A673 (cell line): ENCODE measurements at regions of chr3 and their contacts with region 1.

Region 1: GRCh38 chr3:138923531-138923994 is 23.4 kb downstream of the FOXL2 start:
- DNase-seq: peak; percentile 91
- H3K4me3 ChIP-seq: no peak overlapping the region
- H3K27ac ChIP-seq: no peak overlapping the region
- H3K4me1 ChIP-seq: no peaks in the 10 kb centered on the region
- H3K27me3 ChIP-seq: no peaks in the 10 kb centered on the region
- CTCF ChIP-seq: peak; percentile 92

Region 2: DNA sequence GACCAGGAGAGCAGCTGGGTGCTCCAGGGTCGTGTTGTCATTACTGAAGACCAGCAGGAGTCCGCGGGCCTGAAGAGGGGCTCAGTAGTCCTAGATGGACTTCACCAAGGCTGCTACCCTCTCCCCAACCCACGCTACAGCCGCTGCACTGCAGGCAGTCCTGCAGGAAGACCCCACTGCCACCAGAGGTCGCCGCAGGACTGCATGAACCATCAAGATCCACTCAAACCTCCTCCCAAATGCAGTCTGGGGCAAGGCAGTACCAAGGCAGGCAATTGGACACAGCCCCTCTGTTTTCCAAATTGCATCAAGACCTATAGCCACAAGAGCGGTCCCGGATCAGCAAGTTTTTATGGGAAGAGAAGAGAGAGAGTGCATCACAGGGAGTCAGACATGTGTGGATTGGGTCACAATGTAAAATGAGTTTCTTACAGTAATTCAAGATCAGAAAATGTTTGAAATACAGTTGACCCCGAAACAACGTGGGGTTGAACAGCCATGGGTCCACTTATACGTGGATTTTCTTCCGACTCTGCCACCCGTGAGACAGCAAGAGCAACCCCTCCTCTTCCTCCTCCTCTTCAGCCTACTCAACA is 854.9 kb before region 1 on chr3:
- CTCF ChIA-PET with region 1: no interaction called
- POLR2A ChIA-PET with region 1: no interaction called
- intact Hi-C with region 1: loop called (anchors 2 kb)
- DNase-seq: peak; percentile 85
- H3K4me3 ChIP-seq: no peak overlapping the region
- H3K27ac ChIP-seq: no peak overlapping the region
- H3K4me1 ChIP-seq: no peaks in the 10 kb centered on the region
- H3K27me3 ChIP-seq: no peaks in the 10 kb centered on the region
- CTCF ChIP-seq: peak; percentile 99

Region 3: DNA sequence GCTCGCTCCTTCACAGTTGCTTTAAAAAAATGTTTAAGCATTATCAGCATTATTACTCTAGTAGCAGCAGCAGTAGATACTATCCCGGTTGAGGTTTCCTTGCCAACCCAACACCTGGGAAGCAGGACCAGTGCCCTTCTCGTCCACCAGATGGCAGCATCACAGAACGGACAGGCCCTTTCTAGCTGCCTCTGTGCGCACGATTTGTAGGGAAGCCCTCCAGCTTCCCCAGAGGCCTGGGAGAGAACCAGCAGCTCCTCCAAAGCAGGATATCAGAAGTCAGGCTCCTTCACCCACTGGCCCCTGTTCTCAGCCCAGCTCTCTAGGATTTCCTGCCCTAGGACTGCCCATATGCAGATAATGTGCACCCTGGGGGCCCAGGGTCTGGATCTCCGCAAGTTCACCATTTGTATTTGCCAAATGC is 506.0 kb before region 1 on chr3:
- CTCF ChIA-PET with region 1: interaction called, 8 read pairs
- POLR2A ChIA-PET with region 1: no interaction called
- intact Hi-C with region 1: loop called (anchors 1 kb)
- DNase-seq: peak; percentile 86
- H3K4me3 ChIP-seq: no peak overlapping the region
- H3K27ac ChIP-seq: no peak overlapping the region
- H3K4me1 ChIP-seq: no peaks in the 10 kb centered on the region
- H3K27me3 ChIP-seq: no peaks in the 10 kb centered on the region
- CTCF ChIP-seq: peak; percentile 92

Region 4: DNA sequence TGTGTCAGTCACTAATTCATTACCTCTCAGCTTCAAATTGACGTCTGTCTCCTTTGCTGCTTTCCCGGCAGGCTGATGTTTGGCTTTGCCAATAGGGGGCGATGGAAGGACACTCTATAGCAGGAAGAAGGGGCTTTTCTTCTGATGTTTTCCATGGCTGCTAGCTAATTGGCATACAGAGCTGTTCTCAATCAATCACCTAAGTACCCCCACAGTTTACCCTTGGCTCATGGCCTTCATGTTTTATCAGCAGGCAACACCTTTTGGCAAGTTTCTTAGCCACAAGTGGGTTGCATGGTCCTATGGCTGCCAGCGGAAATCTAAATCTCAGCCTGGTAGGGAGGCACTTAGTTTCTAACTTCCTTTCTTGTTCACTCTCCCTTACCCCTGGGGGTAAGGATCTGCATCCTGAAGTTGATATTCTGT is 444.1 kb before region 1 on chr3:
- CTCF ChIA-PET with region 1: interaction called, 11 read pairs
- POLR2A ChIA-PET with region 1: no interaction called
- intact Hi-C with region 1: no loop called
- DNase-seq: peak; percentile 71
- H3K4me3 ChIP-seq: no peak overlapping the region
- H3K27ac ChIP-seq: no peak overlapping the region
- H3K4me1 ChIP-seq: no peaks in the 10 kb centered on the region
- H3K27me3 ChIP-seq: no peaks in the 10 kb centered on the region
- CTCF ChIP-seq: peak; percentile 92